Naive thymus-derived CD4-positive, alpha-beta T cell (primary cell): ENCODE measurements at regions of chr6 and their contacts with region 1.

Region 1: DNA sequence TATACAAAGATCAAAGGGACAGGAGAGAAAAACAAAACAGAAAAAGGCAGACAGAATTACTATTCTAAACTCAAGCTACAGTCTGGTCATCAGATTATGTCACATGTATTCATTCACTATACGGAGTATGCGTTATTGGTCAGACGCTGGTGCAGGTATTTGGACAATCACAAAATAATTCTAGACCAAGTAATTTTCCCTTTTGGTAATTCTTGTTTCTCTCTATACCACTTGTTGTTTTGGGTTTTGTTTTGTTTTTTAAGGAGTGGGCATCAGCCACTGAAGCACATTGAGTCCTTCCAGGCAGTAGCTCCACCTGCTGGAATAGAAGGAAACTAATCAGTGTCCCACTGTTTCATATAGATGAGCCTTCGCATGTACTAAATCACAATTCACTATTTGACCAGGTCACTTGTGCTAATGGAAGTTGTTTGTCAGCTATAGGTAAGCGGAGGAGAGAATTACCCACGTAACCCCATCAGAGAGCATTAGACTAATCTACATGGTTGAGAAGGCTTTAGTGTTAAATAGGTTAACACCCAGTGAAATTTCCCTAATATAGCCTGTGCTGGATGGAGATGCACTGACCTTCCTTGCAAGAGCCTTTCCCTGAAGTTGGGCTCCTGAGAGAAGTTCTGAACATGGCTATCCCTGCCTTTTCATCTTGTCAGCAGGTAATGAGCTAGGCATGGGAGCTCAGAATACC is 77.9 kb downstream of the TNFAIP3 start:
- DNase-seq: peak in 6 of 9 donors; percentile 7 to 52 (median 39)
- ATAC-seq: peak; percentile 88
- H3K4me3 ChIP-seq: no peak overlapping the region
- H3K4me3 Mint-ChIP-seq: no peak overlapping the region
- H3K27ac ChIP-seq: no peak overlapping the region
- H3K27ac Mint-ChIP-seq: peak overlapping the region in 3 of 9 donors; percentile 45 to 76 (median 59)
- H3K4me1 ChIP-seq: peaks cover 1 to 7% of the 10 kb centered on the region in 2 donors
- H3K4me1 Mint-ChIP-seq: peaks cover 4 to 48% (median 18%) of the 10 kb centered on the region in 7 donors
- H3K27me3 ChIP-seq: no peaks in the 10 kb centered on the region
- H3K27me3 Mint-ChIP-seq: no peaks in the 10 kb centered on the region

Region 2: DNA sequence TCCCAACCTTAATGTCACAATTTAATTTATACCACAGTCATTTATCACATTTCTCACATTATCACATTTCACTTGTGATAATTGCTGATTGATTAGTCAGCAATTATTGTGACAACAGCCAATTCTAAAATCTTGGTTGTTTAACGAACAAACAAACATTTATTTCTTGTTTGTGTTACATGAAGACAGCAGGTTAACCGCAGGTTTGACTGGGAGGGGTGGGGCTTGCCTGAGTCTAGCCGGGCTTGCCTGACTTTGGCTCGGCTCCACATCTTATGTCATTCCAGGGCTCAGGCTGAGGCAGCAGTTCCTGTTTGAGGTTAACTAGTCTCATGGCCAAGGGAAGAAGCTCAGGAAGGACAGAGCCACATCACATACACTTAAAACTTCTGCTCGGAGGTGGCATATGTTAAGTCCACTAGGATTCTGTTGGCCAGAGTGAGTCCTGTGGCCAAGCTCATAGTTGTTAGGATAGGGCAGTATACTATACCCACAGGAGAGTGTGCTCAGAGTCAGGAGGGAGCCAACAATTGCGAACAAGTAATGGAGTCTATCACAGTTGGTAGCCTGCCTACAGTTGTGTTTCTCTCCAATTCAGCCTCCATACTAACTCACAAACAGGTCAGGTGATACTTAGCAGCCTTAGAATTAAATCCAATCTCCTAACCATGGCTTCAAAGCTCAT is 635.7 kb before region 1 on chr6:
- CTCF ChIA-PET with region 1: no interaction called
- POLR2A ChIA-PET with region 1: no interaction called
- intact Hi-C with region 1: no loop called
- DNase-seq: no peak
- ATAC-seq: peak; percentile 64
- H3K4me3 ChIP-seq: no peak overlapping the region
- H3K4me3 Mint-ChIP-seq: no peak overlapping the region
- H3K27ac ChIP-seq: no peak overlapping the region
- H3K27ac Mint-ChIP-seq: no peak overlapping the region
- H3K4me1 ChIP-seq: no peaks in the 10 kb centered on the region
- H3K4me1 Mint-ChIP-seq: peaks cover 0 to 12% (median 5%) of the 10 kb centered on the region in 7 donors
- H3K27me3 ChIP-seq: no peaks in the 10 kb centered on the region
- H3K27me3 Mint-ChIP-seq: peaks cover 0 to 9% (median 0%) of the 10 kb centered on the region in 5 donors

Region 3: DNA sequence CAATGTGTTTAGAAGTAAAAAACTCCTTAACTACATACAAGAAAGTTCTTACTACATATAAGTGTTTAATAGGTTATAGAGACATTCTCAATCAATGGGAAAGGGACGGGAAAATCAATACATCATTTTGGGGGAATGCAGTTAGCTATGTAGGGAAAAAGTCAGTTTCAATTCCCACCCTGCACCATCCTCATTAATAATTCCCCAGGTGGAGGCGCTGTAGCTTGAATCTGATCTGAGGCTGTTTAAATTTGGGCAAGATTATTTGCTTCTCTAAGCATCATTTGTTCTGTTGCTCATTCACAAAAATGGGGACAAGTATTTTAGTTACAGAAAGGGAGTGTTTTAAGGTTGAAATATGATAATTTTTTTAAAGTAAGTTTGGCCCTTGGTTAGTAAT is 469.8 kb before region 1 on chr6:
- CTCF ChIA-PET with region 1: no interaction called
- POLR2A ChIA-PET with region 1: no interaction called
- intact Hi-C with region 1: no loop called
- DNase-seq: no peak
- ATAC-seq: no peak
- H3K4me3 ChIP-seq: no peak overlapping the region
- H3K4me3 Mint-ChIP-seq: no peak overlapping the region
- H3K27ac ChIP-seq: no peak overlapping the region
- H3K27ac Mint-ChIP-seq: no peak overlapping the region
- H3K4me1 ChIP-seq: no peaks in the 10 kb centered on the region
- H3K4me1 Mint-ChIP-seq: no peaks in the 10 kb centered on the region
- H3K27me3 ChIP-seq: peaks cover 0 to 4% of the 10 kb centered on the region in 2 donors
- H3K27me3 Mint-ChIP-seq: peaks cover 15 to 62% (median 27%) of the 10 kb centered on the region in 5 donors

Region 4: DNA sequence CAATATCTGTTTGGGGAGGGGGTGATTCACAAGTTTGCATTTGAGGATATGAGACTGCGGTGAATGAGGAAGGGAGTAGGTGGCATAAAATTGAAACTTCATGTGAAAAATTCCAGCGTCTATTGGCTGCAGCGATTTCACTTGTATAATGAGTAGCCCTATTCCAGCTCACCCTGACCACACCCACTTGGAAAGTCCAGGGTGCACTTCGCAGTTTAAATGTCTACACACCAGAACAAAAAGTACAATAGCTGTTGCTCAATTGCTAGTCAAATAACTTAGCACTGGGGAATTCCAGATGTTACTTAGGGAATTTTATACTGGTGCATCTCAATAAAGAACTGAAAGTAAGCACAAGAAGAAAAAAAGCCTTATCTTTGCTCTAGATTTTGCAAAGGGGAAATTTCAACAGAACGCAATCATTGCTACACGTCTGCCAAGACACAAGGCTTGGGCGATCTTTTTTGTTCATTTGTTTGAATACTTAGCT is 71.6 kb before region 1 on chr6:
- CTCF ChIA-PET with region 1: interaction called, 27 read pairs
- POLR2A ChIA-PET with region 1: interaction called, 15 read pairs
- intact Hi-C with region 1: loop called in 1 of 2 experiments (anchors 1 kb)
- DNase-seq: peak in 6 of 9 donors; percentile 12 to 81 (median 37)
- ATAC-seq: peak; percentile 54
- H3K4me3 ChIP-seq: peak overlapping the region; percentile 0
- H3K4me3 Mint-ChIP-seq: peak overlapping the region; percentile 60 to 98 (median 94)
- H3K27ac ChIP-seq: peak overlapping the region; percentile 99
- H3K27ac Mint-ChIP-seq: peak overlapping the region; percentile 61 to 99 (median 94)
- H3K4me1 ChIP-seq: peaks cover 38 to 49% of the 10 kb centered on the region in 2 donors
- H3K4me1 Mint-ChIP-seq: peaks cover 53 to 91% (median 78%) of the 10 kb centered on the region in 7 donors
- H3K27me3 ChIP-seq: no peaks in the 10 kb centered on the region
- H3K27me3 Mint-ChIP-seq: no peaks in the 10 kb centered on the region

Region 5: GRCh38 chr6:137878486-137879285 is 66.3 kb before region 1 on chr6:
- CTCF ChIA-PET with region 1: interaction called, 11 read pairs
- POLR2A ChIA-PET with region 1: no interaction called
- intact Hi-C with region 1: loop called in 1 of 2 experiments (anchors 1 kb)
- DNase-seq: peak in 6 of 9 donors; percentile 28 to 45 (median 30)
- ATAC-seq: no peak
- H3K4me3 ChIP-seq: no peak overlapping the region
- H3K4me3 Mint-ChIP-seq: peak overlapping the region in 7 of 10 donors; percentile 38 to 58 (median 42)
- H3K27ac ChIP-seq: no peak overlapping the region
- H3K27ac Mint-ChIP-seq: peak overlapping the region; percentile 18 to 92 (median 81)
- H3K4me1 ChIP-seq: peaks cover 23 to 45% of the 10 kb centered on the region in 2 donors
- H3K4me1 Mint-ChIP-seq: peaks cover 24 to 84% (median 70%) of the 10 kb centered on the region in 7 donors
- H3K27me3 ChIP-seq: no peaks in the 10 kb centered on the region
- H3K27me3 Mint-ChIP-seq: no peaks in the 10 kb centered on the region

Region 6: GRCh38 chr6:137893726-137894125 is 51.2 kb before region 1 on chr6:
- CTCF ChIA-PET with region 1: no interaction called
- POLR2A ChIA-PET with region 1: no interaction called
- intact Hi-C with region 1: no loop called
- DNase-seq: no peak
- ATAC-seq: no peak
- H3K4me3 ChIP-seq: no peak overlapping the region
- H3K4me3 Mint-ChIP-seq: no peak overlapping the region
- H3K27ac ChIP-seq: no peak overlapping the region
- H3K27ac Mint-ChIP-seq: no peak overlapping the region
- H3K4me1 ChIP-seq: no peaks in the 10 kb centered on the region
- H3K4me1 Mint-ChIP-seq: peaks cover 0 to 14% (median 3%) of the 10 kb centered on the region in 7 donors
- H3K27me3 ChIP-seq: no peaks in the 10 kb centered on the region
- H3K27me3 Mint-ChIP-seq: no peaks in the 10 kb centered on the region

Region 7: DNA sequence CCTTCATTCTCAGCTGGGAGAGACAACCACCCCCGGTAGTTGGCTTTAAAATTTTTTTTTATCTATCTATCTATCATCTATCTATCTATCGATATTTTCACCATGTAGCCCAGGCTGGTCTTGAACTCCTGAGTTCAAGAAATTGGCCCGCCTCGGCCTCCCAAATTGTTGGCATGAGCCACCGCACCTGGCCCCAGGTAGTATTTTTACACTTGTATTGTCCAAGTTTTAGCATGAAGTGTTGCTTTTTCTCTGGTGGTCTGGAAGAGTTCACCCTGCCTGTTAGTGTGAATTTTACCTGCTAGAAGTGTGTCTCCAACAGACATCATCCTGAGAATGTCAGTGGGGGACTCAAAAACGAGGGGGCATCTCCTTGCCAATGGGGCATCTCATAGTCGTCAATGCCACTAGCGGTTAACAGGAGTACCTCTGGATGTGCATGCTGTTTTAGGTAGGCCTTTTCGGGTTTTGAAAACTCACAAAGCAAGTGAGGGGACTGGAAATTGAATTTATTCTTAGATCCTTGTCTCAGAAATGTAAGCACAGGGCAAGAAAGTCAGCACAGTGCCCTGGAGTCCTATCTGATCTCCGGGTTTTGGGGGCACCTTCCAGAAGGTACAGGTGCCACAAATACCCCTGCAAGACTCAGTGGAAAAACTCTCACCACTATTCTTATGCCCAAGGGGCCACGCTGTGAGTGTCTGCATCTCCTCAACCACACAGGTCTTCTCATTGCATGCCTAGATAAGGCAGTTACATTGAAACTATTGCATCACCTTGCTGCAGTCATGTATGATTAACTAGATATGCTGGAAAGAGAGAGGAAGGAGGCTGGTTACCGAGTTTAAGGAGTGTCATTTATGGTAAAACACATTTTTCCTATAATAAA is 40.8 kb before region 1 on chr6:
- CTCF ChIA-PET with region 1: interaction called, 3 read pairs
- POLR2A ChIA-PET with region 1: no interaction called
- intact Hi-C with region 1: loop called in 1 of 2 experiments (anchors 2 kb)
- DNase-seq: peak in 1 of 9 donors; percentile 49
- ATAC-seq: peak; percentile 72
- H3K4me3 ChIP-seq: no peak overlapping the region
- H3K4me3 Mint-ChIP-seq: peak overlapping the region in 7 of 10 donors; percentile 2 to 79 (median 64)
- H3K27ac ChIP-seq: no peak overlapping the region
- H3K27ac Mint-ChIP-seq: peak overlapping the region in 2 of 9 donors; percentile 10 to 91
- H3K4me1 ChIP-seq: peaks cover 4 to 6% of the 10 kb centered on the region in 2 donors
- H3K4me1 Mint-ChIP-seq: peaks cover 4 to 51% (median 22%) of the 10 kb centered on the region in 7 donors
- H3K27me3 ChIP-seq: no peaks in the 10 kb centered on the region
- H3K27me3 Mint-ChIP-seq: peaks cover 0 to 3% (median 0%) of the 10 kb centered on the region in 5 donors

Region 8: DNA sequence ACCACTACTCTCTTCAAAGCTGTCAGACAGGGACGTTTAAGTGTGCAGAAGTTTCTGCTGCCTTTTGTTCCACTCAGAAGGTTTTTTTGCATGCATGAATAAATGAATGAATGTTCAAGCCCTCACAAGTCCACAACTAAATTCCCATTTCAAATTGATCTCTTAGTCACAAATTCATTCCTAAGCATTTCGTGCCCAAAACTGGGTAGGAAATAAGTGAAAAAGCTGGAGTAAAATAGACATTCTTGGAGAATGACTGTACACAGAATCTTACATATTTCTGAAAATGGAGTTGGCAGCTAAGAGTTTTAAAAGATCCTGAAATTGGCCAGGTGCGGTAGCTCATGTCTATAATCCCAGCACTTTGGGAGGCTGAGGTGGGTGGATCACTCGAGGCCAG is 44.7 kb after region 1 on chr6:
- CTCF ChIA-PET with region 1: no interaction called
- POLR2A ChIA-PET with region 1: no interaction called
- intact Hi-C with region 1: no loop called
- DNase-seq: no peak
- ATAC-seq: no peak
- H3K4me3 ChIP-seq: no peak overlapping the region
- H3K4me3 Mint-ChIP-seq: no peak overlapping the region
- H3K27ac ChIP-seq: no peak overlapping the region
- H3K27ac Mint-ChIP-seq: no peak overlapping the region
- H3K4me1 ChIP-seq: no peaks in the 10 kb centered on the region
- H3K4me1 Mint-ChIP-seq: no peaks in the 10 kb centered on the region
- H3K27me3 ChIP-seq: no peaks in the 10 kb centered on the region
- H3K27me3 Mint-ChIP-seq: peaks cover 6 to 57% (median 27%) of the 10 kb centered on the region in 5 donors